Ovary (tissue), 10 donors: ENCODE measurements at regions of chr22 and their contacts with region 1.

Region 1: GRCh38 chr22:32528984-32529982 is 54.7 kb downstream of the FBXO7 start:
- DNase-seq: peak; percentile 87 to 93 (median 88)
- H3K4me3 ChIP-seq: no peak overlapping the region
- H3K27ac ChIP-seq: peak overlapping the region in 1 of 2 donors; percentile 73
- H3K4me1 ChIP-seq: peaks cover 22% of the 10 kb centered on the region
- H3K27me3 ChIP-seq: no peaks in the 10 kb centered on the region
- CTCF ChIP-seq: peak; percentile 86 to 95 (median 95)
- EP300 ChIP-seq: no peak
- POLR2A ChIP-seq: peak; percentile 53

Region 2: DNA sequence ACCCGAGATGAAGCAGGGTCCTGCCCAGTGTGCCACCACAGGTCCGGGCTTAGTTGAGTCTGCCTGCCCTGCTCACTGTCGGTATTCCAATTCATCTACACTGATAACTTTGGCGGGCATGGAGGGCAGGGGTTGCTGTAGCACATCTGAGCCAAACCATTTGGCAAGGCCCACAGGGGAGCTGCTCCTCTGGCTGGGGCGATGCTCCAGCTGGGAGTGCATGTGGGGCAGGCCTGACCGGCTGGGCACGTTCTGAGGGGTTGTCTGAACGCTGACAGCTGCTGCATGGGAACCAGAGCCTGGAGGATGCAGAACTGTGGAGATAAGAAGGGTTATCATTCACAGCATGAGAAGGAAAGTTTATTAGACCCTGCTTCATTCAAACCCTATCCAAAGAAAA is 1089.5 kb before region 1 on chr22:
- intact Hi-C with region 1: no loop called
- DNase-seq: peak in 4 of 5 donors; percentile 35 to 50 (median 40)
- H3K4me3 ChIP-seq: no peak overlapping the region
- H3K27ac ChIP-seq: no peak overlapping the region
- H3K4me1 ChIP-seq: peaks cover 2% of the 10 kb centered on the region
- H3K27me3 ChIP-seq: no peaks in the 10 kb centered on the region
- CTCF ChIP-seq: no peak
- EP300 ChIP-seq: no peak
- POLR2A ChIP-seq: no peak

Region 3: DNA sequence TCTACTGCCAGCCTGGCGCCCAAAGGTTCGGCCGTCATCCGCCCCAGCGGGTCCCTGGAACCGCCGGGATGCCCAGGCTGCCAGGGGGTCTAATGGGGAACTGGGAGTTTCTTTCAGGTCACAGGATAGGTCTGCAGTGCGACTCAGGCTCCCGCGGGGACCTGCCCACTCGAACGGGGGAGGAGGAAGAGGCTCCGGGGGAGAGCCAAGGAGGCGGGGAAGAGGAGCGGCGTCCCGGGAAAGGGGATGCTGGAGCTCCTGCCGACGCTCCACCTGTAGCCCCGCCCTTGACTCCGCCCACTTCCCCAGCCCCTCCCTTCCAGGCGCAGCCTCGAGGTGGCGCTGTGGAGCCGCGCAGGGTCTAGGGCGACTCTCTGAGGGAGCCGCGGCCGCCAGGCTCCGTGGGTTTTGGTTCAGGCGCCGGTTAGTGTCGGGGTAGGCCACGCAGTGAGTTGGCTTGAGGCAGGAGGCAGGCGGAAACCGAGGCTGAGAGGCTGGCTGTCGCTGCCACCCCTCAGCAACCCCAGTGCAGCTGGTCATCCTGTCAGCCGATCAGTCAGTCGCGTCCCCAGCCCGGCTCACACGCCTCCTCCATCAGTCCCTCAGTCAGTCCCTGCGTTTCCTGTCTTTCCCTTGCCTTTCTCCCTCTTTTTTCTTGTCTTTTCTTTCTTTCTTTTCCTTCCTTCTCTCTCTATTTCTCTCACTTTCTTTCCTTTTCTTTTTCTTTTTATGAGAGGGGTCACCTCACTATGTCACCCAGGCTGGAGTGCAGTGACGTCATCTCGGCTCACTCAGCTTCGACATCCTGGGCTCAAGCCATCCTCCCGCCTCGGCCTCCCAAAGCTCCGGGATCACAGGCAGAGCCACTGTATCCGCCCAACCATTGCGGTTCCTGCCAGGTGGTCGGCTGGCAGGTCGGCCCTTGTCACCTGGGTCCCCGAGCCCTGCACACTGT is 558.5 kb before region 1 on chr22:
- intact Hi-C with region 1: loop called in 1 of 4 experiments (anchors 5 kb)
- DNase-seq: peak; percentile 84 to 95 (median 90)
- H3K4me3 ChIP-seq: peak overlapping the region; percentile 36
- H3K27ac ChIP-seq: no peak overlapping the region
- H3K4me1 ChIP-seq: no peaks in the 10 kb centered on the region
- H3K27me3 ChIP-seq: no peaks in the 10 kb centered on the region
- CTCF ChIP-seq: peak; percentile 84 to 94 (median 87)
- EP300 ChIP-seq: no peak
- POLR2A ChIP-seq: no peak

Region 4: DNA sequence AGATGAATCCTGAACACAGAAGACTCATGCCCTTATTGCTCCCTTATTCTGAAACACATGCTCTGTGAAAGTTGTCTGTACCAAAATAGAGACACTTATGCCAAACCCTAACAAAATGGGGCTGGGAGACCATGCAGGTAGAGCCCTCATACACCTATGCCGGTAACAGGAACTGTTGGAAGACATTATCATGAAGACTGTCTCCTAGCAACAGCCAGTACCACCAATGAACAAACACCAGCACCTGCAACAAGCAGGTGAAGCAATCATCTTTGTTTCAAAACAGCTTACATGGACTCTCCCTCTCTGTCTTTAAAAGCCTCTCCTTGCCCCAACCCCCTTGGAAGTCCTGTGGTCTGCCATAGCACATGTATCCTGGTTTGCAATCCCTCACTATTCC is 291.4 kb before region 1 on chr22:
- intact Hi-C with region 1: no loop called
- DNase-seq: no peak
- H3K4me3 ChIP-seq: no peak overlapping the region
- H3K27ac ChIP-seq: no peak overlapping the region
- H3K4me1 ChIP-seq: no peaks in the 10 kb centered on the region
- H3K27me3 ChIP-seq: no peaks in the 10 kb centered on the region
- CTCF ChIP-seq: no peak
- EP300 ChIP-seq: no peak
- POLR2A ChIP-seq: no peak

Region 5: GRCh38 chr22:32622004-32622743 is 92.9 kb after region 1 on chr22:
- intact Hi-C with region 1: loop called in 3 of 4 experiments (anchors 2 to 10 kb)
- DNase-seq: peak; percentile 51 to 74 (median 68)
- H3K4me3 ChIP-seq: no peak overlapping the region
- H3K27ac ChIP-seq: peak overlapping the region; percentile 9 to 86
- H3K4me1 ChIP-seq: peaks cover 34% of the 10 kb centered on the region
- H3K27me3 ChIP-seq: no peaks in the 10 kb centered on the region
- CTCF ChIP-seq: peak in 1 of 3 donors; percentile 21
- EP300 ChIP-seq: no peak
- POLR2A ChIP-seq: peak; percentile 19

Region 6: DNA sequence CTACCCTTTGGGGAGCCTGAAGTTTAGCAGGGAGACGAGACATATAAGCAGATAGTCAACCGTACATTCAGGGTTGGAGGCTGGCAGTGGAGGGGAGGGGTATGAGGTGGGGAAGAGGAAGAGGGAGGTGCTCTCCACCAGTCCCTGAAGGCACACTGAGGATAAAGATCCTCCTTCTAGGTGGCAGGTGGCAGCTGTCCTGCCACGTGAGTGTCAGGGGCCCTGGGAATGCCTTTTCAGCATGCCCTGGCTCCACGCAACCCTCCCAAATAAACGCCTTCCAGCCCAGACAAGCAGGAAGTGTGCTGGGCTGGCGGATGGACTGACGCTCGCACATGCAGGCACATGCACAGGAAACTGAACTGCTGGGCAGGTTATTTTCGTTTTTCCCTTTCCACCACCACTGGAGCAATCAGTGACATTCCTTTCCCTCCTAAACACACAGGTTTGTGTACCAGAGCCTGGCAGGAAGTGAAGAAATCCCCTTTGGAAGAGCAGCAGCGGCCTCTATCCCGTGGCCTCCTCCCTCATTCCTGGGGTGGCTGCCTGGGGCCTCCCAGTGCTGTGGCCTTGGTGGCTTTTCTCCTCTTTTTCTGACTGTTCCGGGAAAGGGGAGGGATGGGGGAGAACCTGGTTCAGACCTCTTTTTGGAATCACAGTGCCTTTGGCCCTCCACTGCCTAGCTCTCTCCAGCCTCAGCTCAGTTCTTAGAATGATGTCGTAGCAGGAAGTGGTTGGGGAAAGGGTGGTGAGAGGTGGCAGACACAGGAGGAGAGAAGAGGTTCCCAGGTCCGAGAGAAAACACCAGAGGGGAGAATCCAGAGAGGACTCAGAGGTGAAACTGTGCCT is 115.2 kb after region 1 on chr22:
- intact Hi-C with region 1: loop called in 1 of 4 experiments (anchors 10 kb)
- DNase-seq: peak; percentile 44 to 60 (median 45)
- H3K4me3 ChIP-seq: no peak overlapping the region
- H3K27ac ChIP-seq: peak overlapping the region; percentile 34 to 75
- H3K4me1 ChIP-seq: no peaks in the 10 kb centered on the region
- H3K27me3 ChIP-seq: no peaks in the 10 kb centered on the region
- CTCF ChIP-seq: no peak
- EP300 ChIP-seq: no peak
- POLR2A ChIP-seq: no peak

Region 7: DNA sequence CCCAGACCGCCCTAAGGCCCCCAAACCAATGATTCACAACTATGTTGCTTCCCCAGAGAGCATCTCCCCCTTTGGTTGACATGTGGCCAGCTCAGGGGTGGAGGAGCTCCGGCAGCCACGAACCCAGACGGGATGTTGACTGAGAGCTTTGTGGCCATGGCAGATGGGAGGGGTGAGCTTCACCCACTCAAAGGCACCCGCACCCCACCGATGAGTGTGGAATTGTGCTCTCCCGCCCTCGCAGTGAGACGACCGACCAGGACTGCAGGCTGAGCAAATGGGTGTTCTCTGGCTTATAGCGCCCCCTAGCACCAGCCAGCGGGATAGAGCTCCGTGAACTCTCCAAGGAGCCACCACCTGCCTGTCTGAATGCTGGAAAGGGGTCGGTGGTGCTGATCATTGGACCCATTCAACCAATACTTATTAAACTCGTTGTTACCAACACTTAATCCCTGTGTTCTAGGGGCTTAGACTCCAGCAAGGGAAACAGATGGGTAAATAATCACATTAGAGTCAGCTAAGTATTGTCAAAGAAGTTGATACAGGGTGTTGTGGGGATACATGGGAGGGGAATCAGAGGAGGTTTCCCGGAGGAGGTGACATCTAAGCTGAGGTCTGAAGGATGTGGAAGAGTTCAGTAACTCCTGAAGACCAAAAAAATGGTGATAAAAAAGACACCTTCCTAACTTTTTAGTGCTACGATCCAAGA is 267.7 kb after region 1 on chr22:
- intact Hi-C with region 1: loop called (anchors 5 to 10 kb)
- DNase-seq: peak; percentile 44 to 77 (median 65)
- H3K4me3 ChIP-seq: no peak overlapping the region
- H3K27ac ChIP-seq: no peak overlapping the region
- H3K4me1 ChIP-seq: peaks cover 2% of the 10 kb centered on the region
- H3K27me3 ChIP-seq: no peaks in the 10 kb centered on the region
- CTCF ChIP-seq: peak; percentile 24 to 86 (median 52)
- EP300 ChIP-seq: no peak
- POLR2A ChIP-seq: no peak

Region 8: DNA sequence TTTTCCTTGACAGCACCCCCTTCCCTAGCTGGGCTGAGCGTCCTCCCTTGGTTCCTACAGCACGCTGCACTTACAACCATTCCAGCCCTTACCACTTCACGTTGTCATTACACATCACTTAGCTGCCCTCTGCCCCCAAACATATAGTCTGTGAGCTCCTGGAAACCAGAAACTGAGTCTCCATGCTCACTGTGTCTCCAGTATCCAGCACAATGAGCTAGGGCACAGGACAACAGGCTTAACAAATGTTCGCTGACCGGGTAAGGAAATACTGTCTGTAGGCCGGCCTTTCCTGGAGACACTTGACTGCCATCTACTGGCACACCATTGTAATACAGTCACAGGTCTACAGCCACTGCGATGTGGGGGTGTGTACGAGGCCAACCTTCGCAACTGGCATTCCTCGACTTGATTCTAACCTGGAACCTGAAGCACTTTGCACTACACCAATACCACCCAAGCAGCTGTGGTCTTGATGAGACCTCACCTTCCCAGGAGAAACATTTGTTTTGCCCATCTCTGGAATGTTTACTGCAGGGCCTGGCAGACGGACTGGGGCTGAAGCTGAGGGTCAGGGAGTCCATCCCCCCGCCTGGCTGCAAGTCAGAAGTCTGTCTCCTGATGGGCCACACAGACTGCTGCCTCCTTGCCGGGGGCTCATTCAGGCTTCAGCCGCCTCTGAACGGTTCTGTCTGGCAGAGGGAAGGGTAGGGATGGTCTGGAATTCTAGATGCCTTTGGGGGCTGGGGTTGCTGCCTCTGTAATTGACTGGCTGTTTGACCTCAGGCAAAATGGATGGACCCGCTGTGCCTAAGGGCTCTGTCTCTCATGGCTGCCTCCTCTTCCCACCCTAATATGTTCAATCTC is 456.8 kb after region 1 on chr22:
- intact Hi-C with region 1: loop called in 3 of 4 experiments (anchors 2 to 5 kb)
- DNase-seq: peak; percentile 64 to 83 (median 69)
- H3K4me3 ChIP-seq: no peak overlapping the region
- H3K27ac ChIP-seq: no peak overlapping the region
- H3K4me1 ChIP-seq: no peaks in the 10 kb centered on the region
- H3K27me3 ChIP-seq: no peaks in the 10 kb centered on the region
- CTCF ChIP-seq: peak; percentile 81 to 87 (median 82)
- EP300 ChIP-seq: no peak
- POLR2A ChIP-seq: no peak

Region 9: GRCh38 chr22:33000342-33001280 is 471.3 kb after region 1 on chr22:
- intact Hi-C with region 1: loop called in 3 of 4 experiments (anchors 5 kb)
- DNase-seq: peak; percentile 22 to 74 (median 64)
- H3K4me3 ChIP-seq: no peak overlapping the region
- H3K27ac ChIP-seq: no peak overlapping the region
- H3K4me1 ChIP-seq: no peaks in the 10 kb centered on the region
- H3K27me3 ChIP-seq: no peaks in the 10 kb centered on the region
- CTCF ChIP-seq: peak; percentile 78 to 84 (median 80)
- EP300 ChIP-seq: no peak
- POLR2A ChIP-seq: no peak